GM12878 (cell line): ENCODE measurements at regions of chr12 and their contacts with region 1.

Region 1: DNA sequence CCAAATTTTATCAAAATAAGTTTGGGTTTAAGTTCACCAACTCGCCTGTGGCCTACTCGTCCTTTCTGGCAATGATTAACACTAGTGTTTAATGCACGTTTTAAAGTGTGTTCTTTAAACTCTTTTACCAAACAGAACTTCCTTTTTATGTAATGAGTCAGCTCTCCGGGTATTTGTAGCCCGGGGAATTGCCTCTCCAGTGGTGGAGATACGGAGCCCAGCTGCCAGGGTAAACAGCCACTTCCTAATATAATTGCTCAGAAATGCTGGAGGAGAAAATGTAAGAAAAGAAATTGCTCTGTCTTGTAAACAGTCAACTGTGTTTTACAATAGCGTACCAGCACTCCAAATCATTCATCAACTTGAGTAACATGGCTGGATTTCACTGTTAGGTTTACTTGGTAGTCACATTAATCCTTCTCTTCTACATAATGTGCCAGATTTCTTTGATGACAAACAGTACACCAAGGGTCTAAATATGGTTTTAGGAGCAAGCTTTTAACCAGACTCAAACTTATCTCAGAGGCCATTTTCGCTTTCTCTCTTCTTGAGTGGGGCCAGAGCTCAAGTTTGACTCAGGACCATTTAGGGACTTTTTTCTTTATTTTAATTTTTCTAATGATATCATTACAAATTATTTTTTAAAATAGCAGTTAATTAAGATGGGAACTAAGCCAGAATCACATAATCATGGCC is 101.2 kb upstream of the SLC38A2 start:
- DNase-seq: peak; percentile 51
- ATAC-seq: peak; percentile 72
- H3K4me3 ChIP-seq: peak overlapping the region; percentile 30; the same call in 1 of the 2 replicates
- H3K27ac ChIP-seq: peak overlapping the region; percentile 63
- H3K4me1 ChIP-seq: peaks cover 7% of the 10 kb centered on the region; the same call in 1 of the 2 replicates
- H3K27me3 ChIP-seq: no peaks in the 10 kb centered on the region
- CTCF ChIP-seq: no peak
- EP300 ChIP-seq: peak in 1 of 2 experiments; percentile 65; a peak in 2 of 4 replicates
- POLR2A ChIP-seq: no peak
- RAD21 ChIP-seq: no peak

Region 2: GRCh38 chr12:46024099-46024498 is 449.7 kb before region 1 on chr12:
- CTCF ChIA-PET with region 1: no interaction called
- POLR2A ChIA-PET with region 1: no interaction called
- RAD21 ChIA-PET with region 1: no interaction called
- SMC1A ChIA-PET with region 1: no interaction called
- in situ Hi-C with region 1: no loop called
- intact Hi-C with region 1: no loop called
- DNase-seq: no peak
- ATAC-seq: no peak
- H3K4me3 ChIP-seq: no peak overlapping the region
- H3K27ac ChIP-seq: no peak overlapping the region
- H3K4me1 ChIP-seq: no peaks in the 10 kb centered on the region
- H3K27me3 ChIP-seq: no peaks in the 10 kb centered on the region
- CTCF ChIP-seq: no peak
- EP300 ChIP-seq: no peak
- POLR2A ChIP-seq: no peak
- RAD21 ChIP-seq: no peak

Region 3: DNA sequence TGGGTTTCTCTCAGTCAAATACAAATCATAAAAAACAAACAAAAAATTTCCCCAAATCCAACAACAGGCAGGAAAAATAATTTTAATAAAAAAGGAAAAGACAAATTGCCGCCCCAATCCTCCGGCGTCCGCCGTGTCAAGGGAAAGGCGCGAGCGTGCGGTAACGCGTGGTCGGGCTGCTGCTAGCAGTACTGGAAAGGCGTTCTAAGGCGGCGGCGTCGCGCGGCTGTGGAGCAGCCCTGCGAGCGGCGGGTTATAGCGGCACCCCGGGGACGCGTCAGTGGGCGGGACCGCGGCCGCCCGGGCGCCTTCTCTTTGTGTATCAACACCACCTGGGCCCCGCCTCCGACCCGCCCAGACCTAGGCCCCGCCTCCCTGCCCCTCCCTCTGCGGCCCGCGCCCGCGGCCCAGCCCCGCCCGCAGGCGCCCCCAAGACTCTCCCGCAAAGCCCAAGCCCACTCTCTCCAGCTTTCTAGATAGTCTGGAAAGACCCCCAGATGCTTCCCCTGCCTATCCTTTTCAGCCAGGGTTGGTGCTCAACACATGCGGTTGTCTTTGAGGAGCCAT is 101.2 kb before region 1 on chr12 and contains the start of gene SLC38A2:
- CTCF ChIA-PET with region 1: interaction called, 3 read pairs
- POLR2A ChIA-PET with region 1: no interaction called
- RAD21 ChIA-PET with region 1: interaction called, 3 read pairs
- SMC1A ChIA-PET with region 1: interaction called, 4 read pairs
- in situ Hi-C with region 1: no loop called
- intact Hi-C with region 1: loop called (anchors 5 kb)
- DNase-seq: no peak
- ATAC-seq: peak; percentile 90
- H3K4me3 ChIP-seq: peak within 1 kb of the TSS; percentile 84
- H3K27ac ChIP-seq: peak within 1 kb of the TSS; percentile 85
- H3K4me1 ChIP-seq: peaks cover 10% of the 10 kb centered on the region
- H3K27me3 ChIP-seq: no peaks in the 10 kb centered on the region
- CTCF ChIP-seq: no peak
- EP300 ChIP-seq: no peak
- POLR2A ChIP-seq: peak; percentile 99
- RAD21 ChIP-seq: no peak
- polyA plus RNA-seq, gene SLC38A2: 36.2 to 47.3 TPM

Region 4: GRCh38 chr12:46459861-46460545 is 13.8 kb before region 1 on chr12:
- CTCF ChIA-PET with region 1: interaction called, 7 read pairs
- POLR2A ChIA-PET with region 1: interaction called, 21 read pairs
- RAD21 ChIA-PET with region 1: interaction called, 22 read pairs
- SMC1A ChIA-PET with region 1: interaction called, 21 read pairs
- in situ Hi-C with region 1: no loop called
- intact Hi-C with region 1: no loop called
- DNase-seq: no peak
- ATAC-seq: peak; percentile 64
- H3K4me3 ChIP-seq: no peak overlapping the region
- H3K27ac ChIP-seq: no peak overlapping the region
- H3K4me1 ChIP-seq: peaks cover 22% of the 10 kb centered on the region
- H3K27me3 ChIP-seq: no peaks in the 10 kb centered on the region
- CTCF ChIP-seq: no peak
- EP300 ChIP-seq: no peak
- POLR2A ChIP-seq: no peak
- RAD21 ChIP-seq: no peak

Region 5: DNA sequence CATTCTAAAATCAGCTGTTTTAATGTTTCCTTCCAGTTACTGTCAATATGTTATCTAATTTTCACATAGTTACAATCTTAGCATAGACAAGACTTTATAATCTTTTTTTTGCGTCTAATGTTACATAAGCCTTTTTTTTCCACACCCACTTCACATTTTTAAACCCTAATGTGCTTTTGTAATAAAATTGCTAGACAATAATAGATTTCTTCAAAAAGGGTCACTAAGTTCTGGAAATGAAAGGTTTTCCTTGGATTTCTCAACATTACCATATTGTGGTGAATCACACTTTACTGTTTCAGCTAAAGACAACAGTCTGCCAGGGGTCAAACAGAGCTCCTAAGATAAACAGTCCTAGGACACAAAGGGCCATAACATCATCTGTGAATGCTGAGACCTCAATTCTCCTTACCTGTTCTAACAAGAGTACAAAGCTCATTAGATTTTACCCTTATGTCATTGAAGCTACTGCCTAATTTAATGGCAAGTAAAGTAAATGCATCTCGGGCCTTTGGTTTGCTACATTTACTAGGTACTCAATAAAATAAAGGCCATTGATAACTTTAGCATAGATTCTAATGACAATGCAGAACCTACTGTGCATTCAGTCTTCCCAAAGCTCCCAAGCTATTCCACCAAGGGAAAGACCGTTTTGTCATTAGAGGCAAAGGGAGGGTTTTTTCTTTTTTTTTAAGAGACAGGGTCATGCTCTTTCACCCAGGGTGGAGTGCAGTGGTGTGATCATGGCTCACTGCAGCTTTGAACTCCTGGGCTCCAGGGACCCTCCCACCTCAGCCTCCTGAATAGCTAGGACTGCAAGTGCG is 10.0 kb after region 1 on chr12:
- CTCF ChIA-PET with region 1: interaction called, 4 read pairs
- POLR2A ChIA-PET with region 1: interaction called, 3 read pairs
- RAD21 ChIA-PET with region 1: interaction called, 4 read pairs
- SMC1A ChIA-PET with region 1: interaction called, 23 read pairs
- in situ Hi-C with region 1: no loop called
- intact Hi-C with region 1: no loop called
- DNase-seq: no peak
- ATAC-seq: no peak
- H3K4me3 ChIP-seq: no peak overlapping the region
- H3K27ac ChIP-seq: no peak overlapping the region
- H3K4me1 ChIP-seq: no peaks in the 10 kb centered on the region
- H3K27me3 ChIP-seq: no peaks in the 10 kb centered on the region
- CTCF ChIP-seq: no peak
- EP300 ChIP-seq: no peak
- POLR2A ChIP-seq: no peak
- RAD21 ChIP-seq: no peak

Region 6: GRCh38 chr12:46516933-46517578 is 43.3 kb after region 1 on chr12:
- CTCF ChIA-PET with region 1: interaction called, 11 read pairs
- POLR2A ChIA-PET with region 1: interaction called, 5 read pairs
- RAD21 ChIA-PET with region 1: interaction called, 11 read pairs
- SMC1A ChIA-PET with region 1: interaction called, 16 read pairs
- in situ Hi-C with region 1: no loop called
- intact Hi-C with region 1: loop called (anchors 2 kb)
- DNase-seq: peak; percentile 85
- ATAC-seq: peak; percentile 96
- H3K4me3 ChIP-seq: peak overlapping the region; percentile 18; the same call in 1 of the 2 replicates
- H3K27ac ChIP-seq: peak overlapping the region; percentile 97
- H3K4me1 ChIP-seq: peaks cover 30% of the 10 kb centered on the region
- H3K27me3 ChIP-seq: no peaks in the 10 kb centered on the region
- CTCF ChIP-seq: no peak
- EP300 ChIP-seq: peak in 1 of 2 experiments; percentile 48; a peak in 1 of 4 replicates
- POLR2A ChIP-seq: no peak
- RAD21 ChIP-seq: peak; percentile 24

Region 7: DNA sequence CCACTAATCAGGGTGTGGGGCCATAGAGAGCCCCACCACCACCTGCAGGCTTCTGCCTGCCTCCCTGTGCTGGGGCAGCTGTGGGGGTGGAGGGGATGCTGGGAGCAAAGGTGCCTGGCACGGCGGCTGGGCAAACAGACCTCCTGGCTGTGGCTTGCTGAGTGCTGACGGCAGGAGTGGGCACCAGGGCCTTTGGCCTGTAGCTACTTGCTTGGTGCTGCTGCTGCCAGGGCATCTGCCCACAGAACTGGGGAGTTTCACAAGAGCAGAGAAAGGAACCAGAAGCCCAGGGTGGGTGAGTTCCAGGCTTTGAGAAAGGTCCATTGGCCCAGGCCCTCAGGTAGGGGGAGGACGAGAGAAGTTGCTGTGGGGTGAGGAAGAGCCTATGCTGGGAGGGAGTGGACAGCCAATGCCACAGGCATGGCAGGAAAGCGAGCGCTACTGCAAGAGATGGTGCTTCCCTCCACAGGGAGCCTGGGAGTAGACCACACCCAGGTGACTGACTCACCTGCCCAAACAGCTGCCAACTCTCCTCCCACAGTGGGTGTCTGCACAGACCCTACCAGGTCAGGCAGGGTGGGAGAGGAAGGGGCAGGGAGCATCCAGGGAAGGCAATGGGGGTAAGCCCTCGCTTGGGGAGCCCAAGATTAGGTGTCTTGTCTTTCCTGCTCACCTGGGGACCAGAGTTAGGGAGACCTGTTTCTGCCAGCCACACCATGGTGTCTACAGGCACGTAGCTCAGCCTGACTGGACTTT is 1384.9 kb after region 1 on chr12:
- CTCF ChIA-PET with region 1: no interaction called
- POLR2A ChIA-PET with region 1: no interaction called
- RAD21 ChIA-PET with region 1: no interaction called
- SMC1A ChIA-PET with region 1: no interaction called
- in situ Hi-C with region 1: no loop called
- intact Hi-C with region 1: no loop called
- DNase-seq: no peak
- ATAC-seq: no peak
- H3K4me3 ChIP-seq: no peak overlapping the region
- H3K27ac ChIP-seq: no peak overlapping the region
- H3K4me1 ChIP-seq: no peaks in the 10 kb centered on the region
- H3K27me3 ChIP-seq: no peaks in the 10 kb centered on the region
- CTCF ChIP-seq: no peak
- EP300 ChIP-seq: no peak
- POLR2A ChIP-seq: no peak
- RAD21 ChIP-seq: no peak